Posterior cingulate gyrus (tissue), 11 donors: ENCODE measurements at regions of chr2 and their contacts with region 1.

Region 1: GRCh38 chr2:64988420-64989125 is 626 bp upstream of the SLC1A4 start:
- DNase-seq: peak; percentile 27 to 91 (median 54)

Region 2: GRCh38 chr2:64922482-64923384 is 65.8 kb before region 1 on chr2:
- intact Hi-C with region 1: loop called (anchors 10 kb)
- DNase-seq: no peak

Region 3: DNA sequence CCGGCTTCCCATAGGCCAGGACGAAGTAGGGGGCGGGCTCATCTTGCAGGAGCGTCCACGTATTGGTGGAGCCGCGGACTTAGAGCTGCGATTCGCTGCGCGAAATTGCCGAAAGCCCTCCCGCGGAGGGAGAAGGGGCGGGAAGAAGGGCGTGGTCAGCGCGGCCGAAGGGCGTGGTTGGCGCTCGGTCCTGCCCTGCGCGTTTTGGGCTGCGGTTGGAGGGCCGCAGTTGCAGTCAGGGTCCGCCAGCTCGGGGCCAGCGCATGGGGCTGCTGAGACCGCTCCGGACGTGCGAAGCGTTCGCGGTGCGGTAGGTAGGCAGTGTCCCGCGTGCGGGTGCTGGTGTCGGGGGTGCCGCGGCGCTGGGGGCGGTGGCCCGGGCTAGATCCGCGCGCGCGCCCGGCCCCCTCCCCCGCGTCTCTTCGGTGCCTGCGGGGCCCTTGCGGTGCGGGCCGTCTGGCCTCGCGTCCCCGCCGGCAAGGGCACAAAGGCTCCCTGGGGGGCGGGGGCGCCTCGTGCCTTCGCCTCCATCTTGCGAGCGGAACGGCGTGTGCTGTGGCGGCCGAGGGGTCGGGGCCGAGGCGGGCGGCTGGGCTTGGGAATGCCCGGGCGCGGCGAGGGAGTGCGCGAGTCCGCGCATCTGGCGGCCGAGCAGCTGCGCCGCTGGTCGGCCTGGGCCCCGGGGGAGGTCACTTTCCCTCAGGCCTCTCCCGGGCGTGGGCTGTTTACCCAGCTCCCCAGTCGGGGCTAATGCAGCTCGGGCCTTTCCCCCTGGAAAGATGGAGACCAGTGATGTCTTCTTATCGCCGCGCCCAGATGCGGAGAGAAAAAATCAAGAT is 67.9 kb after region 1 on chr2 and contains the start of gene CEP68:
- intact Hi-C with region 1: loop called (anchors 2 kb)
- DNase-seq: peak; percentile 95 to 100 (median 96)

Region 4: GRCh38 chr2:65129826-65130663 is 141.5 kb after region 1 on chr2 and contains the start of gene RAB1A:
- intact Hi-C with region 1: loop called (anchors 5 kb)
- DNase-seq: peak; percentile 98 to 100 (median 100)